ENCODE measurements at regions of chr3 and their contacts with region 1.

Region 1: GRCh38 chr3:53134631-53135232 is 4.5 kb upstream of the RFT1 start:
- DNase-seq: peak; percentile 56
- ATAC-seq: peak; percentile 84
- H3K4me3 ChIP-seq: no peak overlapping the region
- H3K27ac ChIP-seq: no peak overlapping the region
- H3K4me1 ChIP-seq: peaks cover 17 to 35% of the 10 kb centered on the region in 2 experiments
- H3K27me3 ChIP-seq: no peaks in the 10 kb centered on the region
- CTCF ChIP-seq: peak; percentile 84 to 96 (median 94)
- POLR2A ChIP-seq: no peak
- RAD21 ChIP-seq: peak; percentile 87

Region 2: DNA sequence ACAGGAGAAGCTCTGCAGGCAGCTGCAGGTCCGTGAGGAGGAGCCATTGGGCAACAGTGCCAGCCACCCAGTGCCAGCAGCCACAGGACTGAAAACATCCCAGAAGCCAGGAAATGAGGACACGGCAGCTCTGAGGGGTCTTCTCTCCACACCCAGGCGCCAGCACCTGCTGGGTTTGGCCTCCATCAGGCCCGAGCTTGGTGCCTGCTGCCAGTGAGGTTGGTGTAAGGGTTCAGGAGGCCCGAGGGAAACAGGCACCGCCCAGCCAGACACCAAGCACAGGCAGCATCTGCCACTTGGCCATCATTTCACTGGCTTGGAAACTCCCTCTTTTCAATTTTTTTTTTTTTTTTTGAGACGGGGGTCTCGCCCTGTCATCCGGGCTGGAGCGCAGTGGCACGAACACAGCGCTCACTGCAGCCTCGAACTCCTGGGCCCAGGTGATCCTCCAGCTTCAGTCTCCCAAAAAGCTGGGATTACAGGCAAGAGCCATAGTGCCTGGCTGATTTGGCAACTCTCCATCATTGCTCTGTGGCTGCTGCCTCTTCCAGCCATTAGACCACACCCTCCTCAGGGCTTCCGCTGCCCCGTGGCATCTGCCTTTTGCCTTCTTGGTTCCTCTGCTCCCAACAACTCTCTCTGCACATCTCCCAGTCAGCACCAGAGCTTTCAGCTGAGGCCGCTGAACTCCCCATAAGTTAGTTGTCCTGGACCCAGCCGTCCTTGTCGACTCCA is 341.6 kb before region 1 on chr3:
- CTCF ChIA-PET with region 1: no interaction called
- POLR2A ChIA-PET with region 1: no interaction called
- RAD21 ChIA-PET with region 1: no interaction called
- intact Hi-C with region 1: no loop called
- DNase-seq: no peak
- ATAC-seq: no peak
- H3K4me3 ChIP-seq: no peak overlapping the region
- H3K27ac ChIP-seq: no peak overlapping the region
- H3K4me1 ChIP-seq: no peaks in the 10 kb centered on the region
- H3K27me3 ChIP-seq: no peaks in the 10 kb centered on the region
- CTCF ChIP-seq: no peak
- POLR2A ChIP-seq: no peak
- RAD21 ChIP-seq: no peak

Region 3: DNA sequence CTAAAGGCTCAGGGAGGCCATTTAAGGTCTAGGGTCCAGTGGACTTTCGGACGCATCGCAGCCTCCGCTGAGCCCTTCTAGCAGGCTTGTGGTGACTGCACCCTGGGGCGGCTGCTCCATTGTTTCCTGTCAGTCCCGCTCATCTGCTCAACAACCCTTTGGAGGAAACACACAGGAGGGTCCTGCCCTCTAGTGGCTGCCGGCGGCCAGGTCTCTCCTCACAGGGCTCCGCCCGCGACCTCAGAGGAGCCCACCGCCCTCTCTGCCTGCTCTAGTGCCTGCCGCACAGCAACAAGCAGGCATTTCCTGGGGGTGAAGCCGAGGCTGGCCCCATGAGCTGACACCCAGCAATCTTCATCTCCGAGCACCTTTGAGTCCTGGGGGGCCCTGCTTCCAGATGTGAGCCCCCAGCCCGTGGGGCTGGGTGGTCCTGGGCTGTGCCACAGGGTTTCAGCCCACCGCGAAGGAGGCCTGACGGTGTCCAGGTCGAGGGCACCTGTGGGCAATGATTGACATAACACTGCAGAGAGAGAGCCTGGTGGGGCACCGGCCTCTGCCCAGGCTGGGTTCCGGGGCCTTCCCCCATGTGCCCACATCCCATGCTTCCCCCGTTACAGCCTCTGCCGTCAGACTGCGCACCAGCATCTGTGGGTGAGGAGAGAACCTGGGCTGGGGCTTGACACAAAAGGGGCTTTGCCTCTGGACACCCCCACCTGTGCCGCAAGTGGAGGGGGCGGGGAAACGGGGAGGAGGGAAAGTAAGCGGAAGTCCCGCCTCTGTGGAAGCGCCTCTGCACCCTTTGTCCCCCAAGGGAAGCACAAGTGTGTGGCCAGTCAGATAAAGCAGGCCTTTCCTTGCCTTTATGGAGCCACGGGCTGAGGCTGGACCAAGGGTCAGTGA is 61.8 kb before region 1 on chr3:
- CTCF ChIA-PET with region 1: no interaction called
- POLR2A ChIA-PET with region 1: no interaction called
- RAD21 ChIA-PET with region 1: no interaction called
- intact Hi-C with region 1: no loop called
- DNase-seq: peak; percentile 48
- ATAC-seq: peak; percentile 93
- H3K4me3 ChIP-seq: peak overlapping the region; percentile 46 to 62
- H3K27ac ChIP-seq: peak overlapping the region; percentile 47; the same call in 1 of the 2 replicates
- H3K4me1 ChIP-seq: peaks cover 6 to 16% of the 10 kb centered on the region in 2 experiments; a peak in 3 of 4 replicates
- H3K27me3 ChIP-seq: no peaks in the 10 kb centered on the region
- CTCF ChIP-seq: peak; percentile 76 to 91 (median 89); a peak in 5 of 6 replicates
- POLR2A ChIP-seq: peak; percentile 39
- RAD21 ChIP-seq: peak; percentile 95

Region 4: DNA sequence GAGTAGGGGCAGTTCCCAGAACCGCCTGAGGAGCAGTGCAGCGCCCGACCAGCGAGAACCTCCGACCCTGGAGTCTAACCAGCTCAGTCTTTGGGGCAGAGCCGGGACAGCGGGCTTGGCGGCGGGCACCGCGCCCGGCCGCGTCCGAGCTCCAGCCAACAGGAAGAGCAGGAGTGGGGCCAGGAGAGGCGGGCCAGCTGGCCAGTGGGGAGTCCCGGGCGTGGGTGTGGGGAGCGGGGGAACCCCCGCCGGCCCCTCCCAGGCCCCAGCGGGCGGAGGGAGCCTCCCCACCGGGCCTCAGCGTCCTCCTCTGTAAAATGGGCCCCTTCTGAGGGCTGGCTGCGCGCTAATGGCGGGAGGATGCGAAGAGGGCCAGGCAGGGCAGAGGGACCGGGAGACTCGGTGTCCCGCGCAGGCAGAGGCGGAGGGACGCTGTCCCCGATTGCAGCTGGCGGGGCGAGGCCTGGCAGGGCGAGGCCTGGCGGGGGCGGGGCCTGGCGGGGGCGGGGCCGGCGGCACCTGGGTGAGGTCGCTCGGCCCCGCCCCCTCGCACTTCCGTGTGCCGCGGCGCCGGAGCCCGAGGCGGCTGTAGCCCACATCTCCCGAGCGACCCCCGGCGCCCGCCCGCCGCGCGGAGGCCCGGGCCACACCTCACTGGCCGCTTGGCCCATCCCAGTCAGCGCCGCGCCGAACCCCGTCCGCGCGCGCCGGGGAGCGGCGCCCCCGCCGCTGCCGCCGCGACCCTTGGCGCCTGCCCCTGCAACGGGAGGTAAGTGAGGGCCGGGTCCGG is 26.1 kb after region 1 on chr3 and contains the start of gene PRKCD:
- CTCF ChIA-PET with region 1: interaction called, 5 read pairs
- POLR2A ChIA-PET with region 1: interaction called, 6 read pairs
- RAD21 ChIA-PET with region 1: no interaction called
- intact Hi-C with region 1: loop called (anchors 2 kb)
- DNase-seq: peak; percentile 37
- ATAC-seq: peak; percentile 83
- H3K4me3 ChIP-seq: peak within 1 kb of the TSS; percentile 85 to 90
- H3K27ac ChIP-seq: peak within 1 kb of the TSS; percentile 87
- H3K4me1 ChIP-seq: peaks cover 39 to 54% of the 10 kb centered on the region in 2 experiments
- H3K27me3 ChIP-seq: no peaks in the 10 kb centered on the region
- CTCF ChIP-seq: peak in 2 of 3 experiments; percentile 27 to 31; a peak in 3 of 6 replicates
- POLR2A ChIP-seq: no peak
- RAD21 ChIP-seq: no peak
- total RNA-seq, gene PRKCD: 34.4 TPM

Region 5: DNA sequence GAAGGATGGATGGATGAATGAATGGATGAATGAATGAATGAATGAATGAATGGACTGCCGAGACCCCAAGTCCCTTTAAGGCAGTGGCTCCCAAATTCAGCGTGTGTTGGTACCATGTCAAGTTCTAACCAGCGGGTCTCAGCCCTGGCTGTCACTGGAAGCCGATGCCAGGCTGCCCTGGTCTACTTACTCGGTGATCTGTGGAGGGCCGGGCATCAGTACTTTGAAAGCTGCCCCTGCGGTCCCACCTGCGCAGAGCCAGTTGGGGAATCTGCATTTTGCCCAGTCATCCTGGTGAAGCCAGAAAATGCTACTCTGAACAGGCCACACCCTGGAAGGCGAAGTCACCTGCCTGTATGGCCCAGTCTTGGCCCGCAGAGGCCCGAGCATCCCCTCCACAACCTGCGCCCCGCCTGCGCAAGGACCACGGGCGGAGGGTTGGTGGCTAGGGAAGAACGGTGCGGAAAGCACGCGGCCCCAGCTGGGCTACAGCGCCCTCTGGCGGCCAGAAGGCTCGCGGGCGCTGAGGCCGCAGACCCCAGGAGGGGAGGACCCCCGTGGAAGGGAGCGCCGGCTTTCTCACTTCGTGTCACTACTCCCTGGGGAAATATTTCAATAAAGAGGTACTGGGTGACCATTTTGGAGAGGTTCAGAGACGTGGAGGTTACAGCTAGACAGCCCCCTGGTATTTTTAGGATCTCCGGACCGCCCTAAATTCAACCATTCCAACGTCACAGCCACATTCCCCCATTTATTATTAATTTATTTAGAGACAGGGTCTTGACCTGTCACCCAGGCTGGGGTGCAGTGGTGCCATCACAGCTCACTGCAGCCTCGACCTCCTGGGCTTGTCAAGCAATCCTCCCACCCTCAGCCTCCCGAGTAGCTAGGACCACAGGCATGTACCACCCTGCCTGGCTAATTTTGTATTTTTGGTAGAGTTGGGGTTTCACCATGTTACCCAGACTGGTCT is 61.2 kb after region 1 on chr3:
- CTCF ChIA-PET with region 1: interaction called, 28 read pairs
- POLR2A ChIA-PET with region 1: interaction called, 10 read pairs
- RAD21 ChIA-PET with region 1: interaction called, 3 to 9 read pairs
- intact Hi-C with region 1: loop called (anchors 1 kb)
- DNase-seq: peak; percentile 12
- ATAC-seq: peak; percentile 58
- H3K4me3 ChIP-seq: 0 out of 4 replicates have a peak overlapping the region, but pooled peaks of 1 of the 2 experiments have one; percentile 27
- H3K27ac ChIP-seq: peak overlapping the region; percentile 85
- H3K4me1 ChIP-seq: peaks cover 18 to 52% of the 10 kb centered on the region in 2 experiments
- H3K27me3 ChIP-seq: no peaks in the 10 kb centered on the region
- CTCF ChIP-seq: peak; percentile 92 to 99 (median 98)
- POLR2A ChIP-seq: no peak
- RAD21 ChIP-seq: peak; percentile 94

Measured in HCT116 (cell line).